Breast epithelium (tissue), 4 donors: ENCODE measurements at regions of chr2 and their contacts with region 1.

Region 1: GRCh38 chr2:136718273-136718672 is 47.1 kb upstream of the THSD7B start:
- DNase-seq: no peak
- H3K4me3 ChIP-seq: no peak overlapping the region
- H3K27ac ChIP-seq: no peak overlapping the region
- H3K4me1 ChIP-seq: no peaks in the 10 kb centered on the region
- H3K27me3 ChIP-seq: no peaks in the 10 kb centered on the region
- CTCF ChIP-seq: no peak
- POLR2A ChIP-seq: no peak

Region 2: GRCh38 chr2:136765736-136766323 is 47.6 kb after region 1 on chr2:
- intact Hi-C with region 1: no loop called
- DNase-seq: no peak
- H3K4me3 ChIP-seq: peak overlapping the region; percentile 33 to 72 (median 54)
- H3K27ac ChIP-seq: no peak overlapping the region
- H3K4me1 ChIP-seq: no peaks in the 10 kb centered on the region
- H3K27me3 ChIP-seq: peaks cover 0 to 36% of the 10 kb centered on the region in 2 donors
- CTCF ChIP-seq: no peak
- POLR2A ChIP-seq: no peak

Region 3: DNA sequence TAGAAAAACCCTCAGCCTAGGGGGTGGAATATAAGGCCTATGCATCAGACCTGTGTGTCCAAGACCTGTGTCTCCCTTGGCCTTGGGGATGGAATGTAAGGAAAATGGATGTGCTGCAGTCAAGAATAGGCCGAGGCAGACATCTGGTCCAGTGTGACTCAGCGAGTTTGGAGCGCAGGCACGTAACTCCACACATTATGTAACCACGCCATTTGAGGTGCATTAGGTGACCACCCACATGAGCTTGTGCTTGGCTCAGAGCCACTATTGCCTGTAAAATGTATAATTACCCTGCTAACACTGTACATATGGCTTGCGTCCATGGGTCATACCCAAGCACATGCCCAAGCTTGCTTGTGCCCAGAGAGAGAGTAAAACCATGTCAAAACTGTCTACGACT is 665.1 kb after region 1 on chr2:
- intact Hi-C with region 1: loop called (anchors 5 kb)
- DNase-seq: no peak
- H3K4me3 ChIP-seq: no peak overlapping the region
- H3K27ac ChIP-seq: no peak overlapping the region
- H3K4me1 ChIP-seq: no peaks in the 10 kb centered on the region
- H3K27me3 ChIP-seq: no peaks in the 10 kb centered on the region
- CTCF ChIP-seq: no peak
- POLR2A ChIP-seq: no peak